Breast epithelium (tissue), 4 donors: ENCODE measurements at regions of chr7 and their contacts with region 1.

Region 1: GRCh38 chr7:27277619-27278018 is 35.0 kb downstream of the EVX1 start:
- DNase-seq: no peak
- H3K4me3 ChIP-seq: no peak overlapping the region
- H3K27ac ChIP-seq: no peak overlapping the region
- H3K4me1 ChIP-seq: no peaks in the 10 kb centered on the region
- H3K27me3 ChIP-seq: no peaks in the 10 kb centered on the region
- CTCF ChIP-seq: no peak
- POLR2A ChIP-seq: no peak

Region 2: DNA sequence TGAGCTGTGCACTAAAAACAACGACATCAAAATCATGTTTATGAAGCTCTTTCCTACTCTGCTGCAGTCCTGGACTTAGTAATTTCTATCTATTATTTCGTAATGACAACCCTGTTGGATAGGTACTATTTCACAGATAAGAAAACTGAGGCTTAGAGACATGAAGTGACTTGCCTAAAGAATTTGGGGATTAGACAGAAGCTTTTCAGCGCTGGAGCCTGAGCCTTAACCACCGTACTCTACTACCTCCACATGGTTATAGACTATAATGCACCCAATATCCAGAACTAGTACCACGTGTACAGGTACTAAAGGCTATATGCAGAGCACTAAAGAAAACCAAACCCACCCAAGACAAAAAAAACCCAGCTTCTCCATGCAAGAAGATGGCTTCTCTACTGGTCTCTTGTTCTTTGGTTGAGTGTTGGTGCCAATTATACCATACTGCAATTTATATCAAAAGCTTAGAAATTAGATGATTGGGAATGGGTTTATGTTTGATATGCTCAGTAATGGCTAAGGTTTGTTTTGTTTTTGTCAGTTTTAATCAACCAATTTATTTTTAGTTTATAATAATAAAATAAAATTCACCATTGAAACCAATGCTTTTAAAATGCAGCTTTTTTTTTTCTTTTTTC is 992.5 kb before region 1 on chr7:
- intact Hi-C with region 1: loop called (anchors 5 kb)
- DNase-seq: no peak
- H3K4me3 ChIP-seq: no peak overlapping the region
- H3K27ac ChIP-seq: no peak overlapping the region
- H3K4me1 ChIP-seq: no peaks in the 10 kb centered on the region
- H3K27me3 ChIP-seq: no peaks in the 10 kb centered on the region
- CTCF ChIP-seq: no peak
- POLR2A ChIP-seq: no peak